Activated T-helper 2 cell treated with anti-CD3 and anti-CD28 coated beads, Interferon-gamma antibody, Interleukin-2, Interleukin-4, amounts not matched to agents 10 μg/mL and 5 μg/mL and 100 μg/mL, durations not matched to agents 14 hours and 24 hours and 36 hours (primary cell): ENCODE measurements at regions of chrX and their contacts with region 1.

Region 1: DNA sequence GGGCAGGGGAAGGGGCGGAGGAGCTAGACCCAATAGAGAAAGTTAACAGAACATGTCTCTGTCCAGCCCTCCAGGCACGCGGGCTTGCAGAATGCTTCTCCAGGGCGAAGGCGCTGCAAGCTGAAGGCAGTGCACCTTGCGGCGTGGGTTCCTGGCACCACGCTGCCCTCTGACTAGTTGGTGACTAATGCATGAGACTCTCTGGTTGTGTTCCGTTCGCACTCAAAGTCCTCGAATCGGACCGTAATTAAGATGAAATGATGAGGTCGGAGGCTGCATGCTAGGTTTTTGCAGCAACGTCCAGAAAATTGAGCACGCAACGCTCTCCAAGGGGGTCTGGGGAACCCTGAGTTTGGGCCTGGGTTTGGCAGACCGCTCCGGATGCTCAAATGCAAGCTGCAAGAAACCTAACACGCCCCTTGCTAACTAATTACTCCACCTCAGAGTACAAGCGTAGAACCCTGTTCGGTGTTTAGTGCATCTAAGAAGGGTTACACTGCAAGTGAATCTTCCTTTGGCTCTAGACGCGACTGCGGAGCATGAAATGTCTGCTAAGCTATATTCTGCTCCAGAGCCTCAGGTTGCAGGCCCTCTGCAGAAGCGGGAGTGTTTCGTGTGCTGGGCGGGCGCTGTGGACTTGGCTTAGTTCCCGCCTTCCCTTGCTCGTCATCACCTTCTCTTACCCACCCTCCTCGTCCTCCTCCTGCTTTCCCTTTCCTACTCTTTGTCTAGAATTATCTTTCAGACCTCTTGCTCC is 57.1 kb upstream of the NKAP start:
- DNase-seq: no peak
- H3K4me3 Mint-ChIP-seq: no peak overlapping the region
- H3K27ac Mint-ChIP-seq: no peak overlapping the region
- H3K4me1 Mint-ChIP-seq: peaks cover 5% of the 10 kb centered on the region
- H3K27me3 Mint-ChIP-seq: peaks cover 66% of the 10 kb centered on the region

Region 2: DNA sequence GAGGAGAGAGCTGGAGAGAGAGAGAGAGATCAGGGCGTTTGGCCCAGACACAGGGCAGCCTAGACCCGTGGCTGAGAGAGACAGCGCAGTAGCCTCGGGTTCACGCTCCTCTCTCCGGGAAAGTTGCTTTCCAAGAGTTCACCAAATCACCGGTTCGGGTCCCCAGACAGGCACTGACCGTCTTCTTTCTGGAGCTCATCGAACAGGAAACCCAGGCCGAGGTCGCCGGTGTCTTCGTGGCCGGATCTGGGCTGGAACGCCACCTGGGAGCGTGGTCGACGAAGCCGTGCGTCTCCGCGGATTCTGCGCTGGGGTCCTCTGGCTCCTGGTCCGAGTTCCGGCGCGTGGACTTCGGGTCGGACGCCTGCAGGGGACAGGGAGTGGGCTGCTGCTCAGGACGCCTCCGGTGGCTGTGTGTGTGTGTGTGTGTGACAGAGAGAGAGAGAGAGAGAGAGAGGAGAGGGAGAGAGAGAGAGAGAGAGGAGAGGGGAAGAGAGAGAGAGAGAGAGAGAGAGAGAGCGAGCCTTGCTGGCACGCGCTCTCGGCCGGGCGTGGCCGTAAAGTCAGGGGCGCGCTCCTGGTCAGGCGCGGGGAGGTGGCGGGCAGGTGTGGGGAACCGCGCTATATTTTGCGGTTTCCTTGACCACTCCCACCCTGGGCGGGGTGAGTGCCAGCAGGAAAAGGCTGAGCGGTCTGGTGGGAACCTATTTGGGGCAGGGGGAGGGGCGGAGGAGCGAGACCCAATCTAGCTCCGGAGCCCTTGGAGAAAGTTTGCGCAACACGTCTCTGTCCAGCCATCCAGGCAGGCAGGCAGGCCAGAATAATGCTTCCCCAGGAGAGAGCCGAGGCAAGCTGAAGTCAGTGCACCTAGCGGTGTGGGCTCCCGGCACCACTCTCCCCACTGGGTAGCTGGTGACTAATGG is 14.7 kb after region 1 on chrX:
- intact Hi-C with region 1: loop called (anchors 2 kb)
- DNase-seq: no peak
- H3K4me3 Mint-ChIP-seq: peak overlapping the region; percentile 54
- H3K27ac Mint-ChIP-seq: no peak overlapping the region
- H3K4me1 Mint-ChIP-seq: peaks cover 6% of the 10 kb centered on the region
- H3K27me3 Mint-ChIP-seq: peaks cover 49% of the 10 kb centered on the region